Pancreas (tissue), 10 donors: ENCODE measurements at regions of chr9 and their contacts with region 1.

Region 1: GRCh38 chr9:99425923-99426842 is 204.1 kb downstream of the SEC61B start:
- DNase-seq: no peak
- ATAC-seq: no peak
- H3K4me3 ChIP-seq: no peak overlapping the region
- H3K27ac ChIP-seq: no peak overlapping the region
- H3K4me1 ChIP-seq: no peaks in the 10 kb centered on the region
- H3K27me3 ChIP-seq: no peaks in the 10 kb centered on the region
- CTCF ChIP-seq: no peak

Region 2: GRCh38 chr9:99488734-99489413 is 62.7 kb after region 1 on chr9:
- intact Hi-C with region 1: loop called in 1 of 3 experiments (anchors 10 kb)
- DNase-seq: no peak
- ATAC-seq: no peak
- H3K4me3 ChIP-seq: no peak overlapping the region
- H3K27ac ChIP-seq: no peak overlapping the region
- H3K4me1 ChIP-seq: no peaks in the 10 kb centered on the region
- H3K27me3 ChIP-seq: no peaks in the 10 kb centered on the region
- CTCF ChIP-seq: no peak

Region 3: DNA sequence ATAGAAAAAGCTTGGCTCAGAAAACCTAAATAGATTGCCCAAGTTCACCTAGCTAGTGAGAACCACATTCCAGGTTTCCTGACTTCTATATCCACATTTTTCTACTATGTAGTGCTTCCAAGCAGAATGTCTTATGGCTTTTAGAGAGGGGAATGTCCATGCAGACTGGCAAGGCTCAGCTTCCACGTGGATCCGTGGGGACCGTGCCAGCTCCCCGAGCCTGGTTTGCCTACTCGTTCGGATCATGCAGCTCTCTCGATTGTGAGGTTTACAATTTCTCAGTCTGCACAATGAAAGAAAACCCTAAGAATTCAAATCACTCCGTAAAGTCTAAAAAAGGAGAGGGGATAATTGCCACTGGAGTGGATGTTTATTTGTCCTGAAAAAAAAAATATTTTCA is 139.0 kb after region 1 on chr9:
- intact Hi-C with region 1: no loop called
- DNase-seq: no peak
- ATAC-seq: no peak
- H3K4me3 ChIP-seq: no peak overlapping the region
- H3K27ac ChIP-seq: no peak overlapping the region
- H3K4me1 ChIP-seq: no peaks in the 10 kb centered on the region
- H3K27me3 ChIP-seq: no peaks in the 10 kb centered on the region
- CTCF ChIP-seq: no peak